Activated CD4-positive, alpha-beta T cell treated with anti-CD3 and anti-CD28 coated beads, Interleukin-2, amount 10 ng/mL, durations not matched to agents 24 days and 14 days (primary cell): ENCODE measurements at regions of chrX and their contacts with region 1.

Region 1: GRCh38 chrX:65866146-65866545 is 173.7 kb downstream of the VSIG4 start:
- DNase-seq: peak; percentile 81
- H3K4me3 Mint-ChIP-seq: peak overlapping the region; percentile 32
- H3K27ac Mint-ChIP-seq: peak overlapping the region; percentile 71
- H3K4me1 Mint-ChIP-seq: peaks cover 21% of the 10 kb centered on the region
- H3K27me3 Mint-ChIP-seq: no peaks in the 10 kb centered on the region

Region 2: DNA sequence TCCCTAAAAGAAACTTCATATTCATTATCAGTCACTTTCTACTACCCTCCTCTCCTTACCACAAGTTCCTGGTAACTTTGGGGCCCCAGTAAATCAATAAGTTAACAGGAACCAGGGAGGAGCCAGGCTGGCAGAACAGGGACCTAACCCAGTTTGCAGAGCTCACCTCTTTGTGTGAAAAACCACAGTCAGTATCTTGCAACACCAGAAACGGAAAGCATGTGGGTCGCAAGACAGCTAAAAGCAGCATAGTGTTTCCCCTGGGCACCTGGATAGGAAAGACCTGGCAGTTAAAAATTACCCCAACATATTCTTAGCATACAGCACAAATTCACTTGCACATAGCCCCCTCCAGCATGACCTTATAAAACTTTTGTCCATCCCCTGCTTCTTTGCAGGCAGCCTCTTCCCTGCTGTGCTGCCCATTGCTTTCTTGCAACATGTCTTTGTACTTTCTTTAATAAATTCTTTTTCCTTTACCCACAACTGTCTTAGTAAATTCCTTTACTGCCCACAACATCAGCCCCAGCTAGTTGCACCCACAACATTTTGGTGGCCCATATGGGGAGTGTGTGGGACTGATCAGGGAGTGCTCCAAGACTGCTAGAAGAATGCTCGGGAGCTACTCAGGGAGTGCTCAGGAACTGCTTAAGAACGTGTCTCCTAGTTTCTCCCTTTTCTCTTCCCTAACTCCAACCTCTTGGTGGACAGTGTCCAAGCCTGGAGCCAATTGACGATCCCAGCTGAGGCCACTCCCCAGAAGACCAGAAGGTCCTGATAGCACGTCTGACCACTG is 115.3 kb before region 1 on chrX:
- intact Hi-C with region 1: loop called (anchors 10 kb)
- DNase-seq: peak; percentile 79
- H3K4me3 Mint-ChIP-seq: peak overlapping the region; percentile 57
- H3K27ac Mint-ChIP-seq: peak overlapping the region; percentile 57
- H3K4me1 Mint-ChIP-seq: peaks cover 32% of the 10 kb centered on the region
- H3K27me3 Mint-ChIP-seq: no peaks in the 10 kb centered on the region

Region 3: GRCh38 chrX:65811558-65812228 is 54.5 kb before region 1 on chrX:
- intact Hi-C with region 1: no loop called
- DNase-seq: no peak
- H3K4me3 Mint-ChIP-seq: no peak overlapping the region
- H3K27ac Mint-ChIP-seq: no peak overlapping the region
- H3K4me1 Mint-ChIP-seq: no peaks in the 10 kb centered on the region
- H3K27me3 Mint-ChIP-seq: peaks cover 7% of the 10 kb centered on the region

Region 4: DNA sequence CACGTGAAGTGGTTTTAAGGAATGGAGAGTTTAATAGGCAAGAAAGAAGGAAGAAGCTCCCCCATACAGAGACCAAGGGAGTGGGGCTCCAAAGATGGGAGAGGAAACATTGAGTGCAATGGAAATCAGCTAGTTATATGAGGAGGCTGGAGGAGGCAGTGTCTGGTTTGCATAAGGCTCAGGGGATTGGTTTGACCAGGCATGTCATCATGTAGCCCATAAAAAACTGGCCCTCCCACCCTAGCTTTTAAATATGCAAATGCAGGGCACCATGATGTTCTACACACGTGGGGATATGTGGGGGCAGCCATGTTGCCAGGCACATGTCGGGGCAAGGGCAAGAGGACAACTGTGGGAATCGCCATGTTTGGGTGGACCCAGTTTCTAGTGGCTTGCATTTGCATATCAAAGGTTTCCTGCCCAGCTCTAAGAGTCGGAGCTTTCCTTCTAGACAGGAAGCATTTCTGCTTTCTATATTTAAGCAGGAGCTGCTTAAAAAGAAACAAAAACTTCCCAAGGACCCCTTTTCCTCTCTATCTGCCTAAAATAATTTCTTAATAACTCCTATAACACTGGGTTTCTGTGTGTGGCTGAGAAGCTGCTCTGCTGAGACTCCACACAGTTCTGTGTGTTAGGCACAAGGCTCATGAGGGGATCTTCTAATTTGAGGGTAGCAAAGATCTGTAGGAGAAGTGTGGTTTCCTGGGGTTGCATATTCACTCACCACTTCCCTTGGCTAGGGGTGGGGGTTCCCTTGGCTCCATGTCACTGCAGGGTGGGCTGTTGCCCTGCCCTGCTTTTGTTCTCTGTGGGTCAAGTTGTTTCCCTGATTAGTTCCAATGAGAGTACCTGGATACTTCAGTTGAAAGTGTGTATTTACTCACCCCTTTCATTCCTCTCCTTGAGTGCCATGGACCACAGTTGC is 60.2 kb after region 1 on chrX:
- intact Hi-C with region 1: loop called (anchors 5 kb)
- DNase-seq: peak; percentile 85
- H3K4me3 Mint-ChIP-seq: peak overlapping the region; percentile 48
- H3K27ac Mint-ChIP-seq: peak overlapping the region; percentile 93
- H3K4me1 Mint-ChIP-seq: peaks cover 37% of the 10 kb centered on the region
- H3K27me3 Mint-ChIP-seq: no peaks in the 10 kb centered on the region